ENCODE measurements at regions of chr1 and their contacts with region 1.

Region 1: DNA sequence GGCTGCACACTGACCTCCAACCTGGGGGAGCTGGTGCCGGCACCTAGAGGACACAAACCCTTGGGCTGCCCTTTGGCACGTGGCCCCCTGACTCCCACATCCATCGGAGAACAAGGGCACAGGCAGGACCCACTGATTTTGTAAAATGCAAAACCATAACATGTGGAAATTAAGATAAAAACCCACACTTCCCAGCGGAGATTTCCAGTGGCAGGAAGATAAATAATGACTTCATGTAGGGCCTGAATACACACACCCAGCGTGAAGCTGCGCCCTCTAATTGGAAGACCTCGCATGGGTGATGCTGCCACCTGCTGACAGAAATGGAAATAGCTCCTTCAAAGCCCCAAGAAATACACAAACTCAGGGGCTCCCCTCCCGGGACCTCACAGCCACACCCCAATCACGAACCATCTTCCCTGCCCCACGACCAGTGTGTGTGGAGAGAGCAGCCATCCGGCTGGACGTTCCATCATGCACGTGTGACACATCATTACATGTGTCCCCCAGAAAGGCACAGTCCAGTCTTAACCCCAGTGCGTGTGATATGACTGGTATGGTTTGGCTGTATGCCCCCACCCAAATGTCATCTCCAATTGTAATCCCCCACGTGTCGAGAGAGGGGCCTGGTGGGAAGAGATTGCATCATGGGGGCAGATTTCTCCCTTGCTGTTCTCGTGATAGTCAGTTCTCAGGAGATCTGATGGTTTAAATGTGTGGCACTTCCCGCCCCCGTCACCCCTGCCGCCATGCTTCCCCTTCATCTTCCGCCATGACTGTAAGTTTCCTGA is 5.7 kb upstream of the TPRG1L start:
- DNase-seq: peak; percentile 65

Region 2: GRCh38 chr1:3564921-3565827 is 53.9 kb before region 1 on chr1:
- CTCF ChIA-PET with region 1: interaction called, 19 read pairs
- POLR2A ChIA-PET with region 1: no interaction called
- DNase-seq: peak; percentile 79

Measured in HEK293T (cell line).